GM13976 (cell line): ENCODE measurements at regions of chr2 and their contacts with region 1.

Region 1: GRCh38 chr2:103161456-103162289 is 399.8 kb downstream of the TMEM182 start:
- DNase-seq: peak; percentile 46
- CTCF ChIP-seq: peak; percentile 73

Region 2: GRCh38 chr2:102114290-102114721 is 1047.4 kb before region 1 on chr2:
- in situ Hi-C with region 1: no loop called
- DNase-seq: no peak
- CTCF ChIP-seq: no peak

Region 3: DNA sequence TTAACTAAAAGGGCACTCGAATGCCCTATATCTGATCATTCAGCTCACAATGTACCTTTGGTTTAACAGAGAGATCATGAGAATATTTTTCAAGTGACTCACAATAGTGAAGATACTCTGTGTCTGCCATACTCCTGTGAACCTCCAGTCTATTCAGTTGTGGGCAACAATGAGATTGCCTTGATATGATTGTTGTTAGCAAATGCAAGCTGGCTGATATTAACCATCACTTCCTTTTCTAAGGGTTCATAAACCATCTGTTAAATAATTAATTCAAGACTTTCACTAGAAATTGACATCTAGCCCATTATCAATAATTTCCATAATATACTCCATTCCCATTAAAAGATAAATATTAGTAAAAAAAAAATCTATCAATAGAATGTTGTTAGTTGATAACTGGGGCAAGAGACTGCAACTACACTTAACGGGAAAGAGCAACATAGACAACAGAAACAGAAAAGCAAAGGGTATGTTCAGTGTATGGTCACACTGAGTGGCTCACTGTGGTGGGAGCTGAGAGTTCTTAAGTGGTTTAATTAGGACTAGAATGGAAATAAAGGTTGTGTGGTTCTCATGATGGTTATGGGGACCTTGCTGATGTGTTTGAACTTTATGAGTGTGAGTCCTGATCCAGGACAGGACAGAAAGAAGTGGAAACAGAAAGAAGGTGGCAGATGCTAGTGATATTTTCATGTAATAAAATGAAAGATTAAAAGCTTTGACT is 726.9 kb before region 1 on chr2:
- in situ Hi-C with region 1: no loop called
- DNase-seq: no peak
- CTCF ChIP-seq: no peak

Region 4: GRCh38 chr2:103448495-103448894 is 286.8 kb after region 1 on chr2:
- in situ Hi-C with region 1: no loop called
- DNase-seq: no peak
- CTCF ChIP-seq: no peak

Region 5: GRCh38 chr2:104872866-104873688 is 1711.4 kb after region 1 on chr2:
- in situ Hi-C with region 1: loop called (anchors 25 kb)
- DNase-seq: peak; percentile 85
- CTCF ChIP-seq: peak; percentile 49